Ascending aorta (tissue), 2 donors: ENCODE measurements at regions of chr11 and their contacts with region 1.

Region 1: DNA sequence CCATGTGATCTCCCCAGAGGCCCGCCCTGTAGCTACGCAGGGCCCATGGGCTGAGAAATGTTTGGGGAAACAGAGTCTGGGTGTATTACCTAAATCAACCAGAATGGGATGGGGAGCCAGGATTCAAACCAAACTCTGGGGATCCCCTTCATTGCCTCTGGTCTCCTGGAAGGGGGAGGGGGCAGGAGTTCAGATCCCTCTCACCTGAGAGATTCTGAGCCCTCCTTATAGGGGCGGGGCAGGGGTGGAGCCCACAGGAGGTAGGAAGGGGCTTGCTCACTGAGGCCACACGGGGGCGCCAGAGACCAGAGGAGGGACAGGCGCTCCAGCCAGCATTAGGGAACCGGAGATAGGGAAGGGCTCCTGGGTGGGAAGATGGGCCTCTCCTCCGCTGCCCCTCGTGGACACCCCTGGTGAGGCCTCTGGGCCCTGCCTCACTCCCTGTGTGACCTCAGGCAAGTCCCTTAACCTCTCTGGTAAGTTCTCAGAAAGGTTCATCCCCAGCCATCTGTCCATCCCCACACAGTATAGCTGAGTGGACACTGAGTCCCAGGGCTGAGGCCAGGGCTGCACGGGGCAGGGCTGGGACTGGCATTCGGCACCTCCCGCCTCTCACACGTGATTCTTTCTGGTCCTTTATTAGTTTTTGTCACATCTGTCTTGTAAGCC is 2.7 kb upstream of the CDC42BPG start:
- DNase-seq: peak in 1 of 2 donors; percentile 94
- H3K4me3 ChIP-seq: no peak overlapping the region
- H3K27ac ChIP-seq: no peak overlapping the region
- H3K4me1 ChIP-seq: peaks cover 16 to 17% of the 10 kb centered on the region in 2 donors
- H3K27me3 ChIP-seq: no peaks in the 10 kb centered on the region
- CTCF ChIP-seq: peak; percentile 97 to 98 (median 98)

Region 2: GRCh38 chr11:64878494-64879243 is 31.5 kb after region 1 on chr11 and contains the start of gene EHD1:
- intact Hi-C with region 1: no loop called
- DNase-seq: peak; percentile 91 to 99
- H3K4me3 ChIP-seq: peak within 1 kb of the TSS; percentile 67 to 93
- H3K27ac ChIP-seq: peak within 1 kb of the TSS; percentile 89 to 92
- H3K4me1 ChIP-seq: peaks cover 13 to 30% of the 10 kb centered on the region in 2 donors
- H3K27me3 ChIP-seq: no peaks in the 10 kb centered on the region
- CTCF ChIP-seq: peak; percentile 40 to 61 (median 56)
- total RNA-seq, gene EHD1: 216 TPM

Region 3: GRCh38 chr11:64894070-64894796 is 47.1 kb after region 1 on chr11:
- intact Hi-C with region 1: loop called (anchors 1 kb)
- DNase-seq: peak in 1 of 2 donors; percentile 92
- H3K4me3 ChIP-seq: no peak overlapping the region
- H3K27ac ChIP-seq: no peak overlapping the region
- H3K4me1 ChIP-seq: no peaks in the 10 kb centered on the region
- H3K27me3 ChIP-seq: no peaks in the 10 kb centered on the region
- CTCF ChIP-seq: peak; percentile 84 to 93 (median 93)